SK-N-SH (cell line): ENCODE measurements at regions of chr17 and their contacts with region 1.

Region 1: DNA sequence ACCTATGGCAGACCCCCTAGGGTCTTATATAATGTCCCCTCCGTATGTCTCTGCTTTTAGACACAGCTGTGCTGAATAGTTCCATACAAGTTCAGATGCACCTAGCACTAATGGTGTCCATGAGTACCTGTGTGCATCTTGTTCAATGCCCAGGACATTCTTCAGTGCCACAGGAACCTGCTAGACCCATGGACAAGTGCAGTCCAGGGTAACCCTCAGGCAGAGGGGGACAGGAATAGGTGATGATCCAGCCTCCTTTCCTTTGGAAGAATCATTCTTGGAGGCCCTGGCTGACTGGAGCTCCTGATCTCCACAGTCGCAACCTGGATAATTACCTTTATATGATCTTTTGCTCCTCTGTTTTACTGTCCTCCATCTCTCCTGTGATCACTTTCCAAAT is 28.4 kb upstream of the PPM1D start:
- DNase-seq: no peak
- H3K4me3 ChIP-seq: no peak overlapping the region
- H3K27ac ChIP-seq: peak overlapping the region in 1 of 2 experiments; percentile 93; a peak in 2 of 4 replicates
- H3K4me1 ChIP-seq: peaks cover 2 to 11% of the 10 kb centered on the region in 2 experiments; a peak in 3 of 4 replicates
- H3K27me3 ChIP-seq: no peaks in the 10 kb centered on the region
- CTCF ChIP-seq: no peak
- EP300 ChIP-seq: no peak
- RAD21 ChIP-seq: no peak

Region 2: GRCh38 chr17:60554351-60554788 is 17.2 kb before region 1 on chr17:
- CTCF ChIA-PET with region 1: interaction called, 57 read pairs
- POLR2A ChIA-PET with region 1: no interaction called
- DNase-seq: no peak
- H3K4me3 ChIP-seq: no peak overlapping the region
- H3K27ac ChIP-seq: no peak overlapping the region
- H3K4me1 ChIP-seq: no peaks in the 10 kb centered on the region
- H3K27me3 ChIP-seq: no peaks in the 10 kb centered on the region
- CTCF ChIP-seq: no peak
- EP300 ChIP-seq: no peak
- RAD21 ChIP-seq: no peak